Gastrocnemius medialis (tissue), 4 donors: ENCODE measurements at regions of chrX and their contacts with region 1.

Region 1: DNA sequence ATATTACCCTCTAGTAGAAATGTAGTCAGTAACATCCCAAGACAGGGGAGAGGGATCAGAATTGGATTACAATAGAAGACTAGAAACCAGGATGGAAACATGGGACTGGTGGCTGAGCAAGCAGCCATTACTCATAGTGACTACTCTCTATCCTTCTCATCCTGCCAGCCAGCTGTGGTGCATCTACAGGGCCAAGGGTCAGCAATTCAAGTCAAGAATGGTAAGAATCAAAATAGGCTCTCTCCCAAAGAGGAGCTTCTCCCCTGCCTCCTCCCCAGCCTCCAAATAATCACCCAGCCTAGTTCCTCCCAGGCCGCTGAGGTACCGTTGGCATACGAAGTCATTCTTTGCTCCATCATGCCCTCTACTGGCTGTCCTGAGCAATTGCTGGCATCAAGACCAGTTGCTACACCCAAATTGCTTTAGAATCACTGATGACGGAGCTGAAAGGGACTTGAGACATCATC is 19.4 kb downstream of the AWAT2 start:
- DNase-seq: peak in 1 of 2 donors; percentile 14
- ATAC-seq: peak; percentile 49 to 56
- H3K4me3 ChIP-seq: no peak overlapping the region
- H3K27ac ChIP-seq: no peak overlapping the region
- H3K4me1 ChIP-seq: no peaks in the 10 kb centered on the region
- H3K27me3 ChIP-seq: no peaks in the 10 kb centered on the region
- CTCF ChIP-seq: peak in 4 of 5 experiments; percentile 45 to 65 (median 61)
- POLR2A ChIP-seq: no peak

Region 2: DNA sequence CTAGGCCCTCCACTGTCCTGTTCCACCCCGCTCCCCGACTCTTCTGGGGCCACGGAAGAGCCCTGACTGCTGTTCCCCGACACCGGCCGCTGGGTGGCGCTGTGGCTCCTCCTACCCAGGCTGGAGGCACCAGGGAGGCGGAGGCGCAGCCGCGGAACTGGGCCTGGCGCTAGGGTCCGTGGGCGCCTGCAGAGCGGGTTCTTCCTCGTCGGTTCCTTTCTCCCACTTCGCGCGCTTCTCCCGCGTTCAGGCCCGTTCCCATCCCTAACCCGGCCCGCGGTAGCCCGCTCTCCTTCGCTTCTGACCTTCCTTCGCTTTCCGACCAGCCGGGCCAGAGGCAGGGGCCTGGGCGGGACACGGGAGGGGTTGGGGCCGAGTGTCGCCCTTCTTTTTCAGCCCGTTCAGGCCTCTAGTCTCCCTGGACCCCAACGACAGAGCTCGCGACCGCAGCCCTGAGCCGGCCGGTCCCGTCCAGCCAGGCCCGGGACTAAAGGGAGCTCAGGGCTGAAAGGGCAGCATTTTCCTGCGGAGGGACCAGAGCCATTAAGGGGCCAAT is 491.9 kb before region 1 on chrX:
- in situ Hi-C with region 1: loop called in 2 of 4 experiments (anchors 5 to 25 kb)
- intact Hi-C with region 1: loop called (anchors 2 kb)
- DNase-seq: peak; percentile 23 to 43
- ATAC-seq: peak; percentile 78 to 80
- H3K4me3 ChIP-seq: peak overlapping the region; percentile 50 to 60 (median 53)
- H3K27ac ChIP-seq: no peak overlapping the region
- H3K4me1 ChIP-seq: no peaks in the 10 kb centered on the region
- H3K27me3 ChIP-seq: no peaks in the 10 kb centered on the region
- CTCF ChIP-seq: peak; percentile 62 to 80 (median 74)
- POLR2A ChIP-seq: no peak

Region 3: GRCh38 chrX:69543572-69543971 is 486.8 kb before region 1 on chrX:
- in situ Hi-C with region 1: loop called in 2 of 4 experiments (anchors 5 to 25 kb)
- intact Hi-C with region 1: loop called (anchors 2 kb)
- DNase-seq: no peak
- ATAC-seq: no peak
- H3K4me3 ChIP-seq: no peak overlapping the region
- H3K27ac ChIP-seq: no peak overlapping the region
- H3K4me1 ChIP-seq: no peaks in the 10 kb centered on the region
- H3K27me3 ChIP-seq: no peaks in the 10 kb centered on the region
- CTCF ChIP-seq: no peak
- POLR2A ChIP-seq: no peak

Region 4: DNA sequence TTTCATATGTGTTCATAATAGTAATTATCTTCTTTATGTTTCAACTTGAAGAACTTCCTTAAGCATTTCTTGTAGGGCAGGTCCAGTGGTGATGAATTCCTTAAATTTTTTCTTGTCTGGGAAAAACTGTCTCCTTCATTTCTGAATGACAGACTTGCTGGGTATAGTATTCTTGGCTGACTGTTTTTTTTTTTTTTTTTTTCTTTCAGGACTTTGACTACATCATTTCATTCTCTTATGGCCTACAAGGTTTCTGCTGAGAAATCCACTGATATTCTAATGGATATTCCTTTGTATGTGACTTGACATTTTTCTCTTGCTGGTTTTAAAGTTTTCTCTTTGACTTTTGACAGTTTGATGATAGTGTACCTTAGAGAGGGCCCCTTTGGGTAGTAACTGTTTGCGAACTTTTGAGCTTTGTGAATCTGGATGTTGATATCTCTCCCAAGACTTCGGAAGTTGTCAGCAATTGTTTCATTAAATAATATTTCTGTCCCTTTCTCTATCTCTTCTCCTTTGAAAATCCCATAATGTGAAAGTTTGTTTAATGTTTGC is 360.3 kb before region 1 on chrX:
- in situ Hi-C with region 1: no loop called
- intact Hi-C with region 1: no loop called
- DNase-seq: no peak
- ATAC-seq: no peak
- H3K4me3 ChIP-seq: no peak overlapping the region
- H3K27ac ChIP-seq: no peak overlapping the region
- H3K4me1 ChIP-seq: no peaks in the 10 kb centered on the region
- H3K27me3 ChIP-seq: peaks cover 0 to 3% (median 0%) of the 10 kb centered on the region in 3 donors
- CTCF ChIP-seq: no peak
- POLR2A ChIP-seq: no peak